ENCODE measurements at regions of chr22 and their contacts with region 1.

Region 1: GRCh38 chr22:44012162-44012561 is 11.9 kb upstream of the PARVB start:
- H3K4me3 Mint-ChIP-seq: no peak overlapping the region
- H3K27ac Mint-ChIP-seq: peak overlapping the region; percentile 91
- H3K4me1 Mint-ChIP-seq: peaks cover 24% of the 10 kb centered on the region
- H3K27me3 Mint-ChIP-seq: no peaks in the 10 kb centered on the region

Region 2: DNA sequence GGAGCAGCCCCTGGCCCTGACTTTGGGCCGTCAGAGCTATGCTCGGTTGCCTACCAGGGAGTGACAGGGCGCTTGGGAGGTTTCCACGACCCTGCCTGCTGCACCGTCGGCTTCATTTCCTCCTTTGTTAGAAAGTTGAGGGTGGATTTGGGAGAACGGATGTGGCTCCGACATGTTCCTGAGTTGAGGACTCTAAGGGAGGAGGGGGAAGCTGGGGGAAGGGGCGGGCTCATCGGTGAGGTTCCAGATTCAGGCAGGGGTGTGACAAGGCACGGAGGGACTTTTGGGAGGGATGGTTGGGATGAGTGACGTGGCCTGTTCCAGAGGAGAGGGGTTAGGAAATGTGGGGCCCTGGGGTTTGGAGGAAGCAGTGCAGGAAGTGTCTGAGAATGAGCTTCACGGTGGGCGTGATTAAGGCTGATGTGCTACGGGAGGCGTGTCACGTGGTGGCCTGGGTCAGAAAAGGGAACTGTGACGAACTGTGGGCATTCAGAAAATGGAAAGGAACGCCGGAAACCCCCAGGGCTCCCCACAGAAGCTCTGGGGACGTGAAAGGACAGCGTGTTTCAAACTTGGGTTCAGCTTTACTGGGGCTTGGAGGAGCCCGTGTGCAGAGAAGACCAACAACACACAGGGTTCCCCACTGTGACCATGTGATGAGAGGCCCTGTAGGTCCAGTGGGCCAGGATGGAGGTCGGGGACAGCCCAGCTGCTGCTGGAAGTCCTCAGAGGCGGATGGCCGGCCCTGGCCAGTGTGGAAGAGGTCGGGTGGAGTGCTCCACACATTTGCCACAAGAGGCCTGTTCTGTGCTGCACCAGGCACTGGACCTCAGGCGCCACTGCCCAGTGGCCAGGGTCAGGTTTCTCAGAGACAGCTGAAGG is 14.7 kb after region 1 on chr22:
- intact Hi-C with region 1: loop called (anchors 1 kb)
- H3K4me3 Mint-ChIP-seq: peak overlapping the region; percentile 82
- H3K27ac Mint-ChIP-seq: peak overlapping the region; percentile 100
- H3K4me1 Mint-ChIP-seq: peaks cover 87% of the 10 kb centered on the region
- H3K27me3 Mint-ChIP-seq: no peaks in the 10 kb centered on the region

Region 3: GRCh38 chr22:44049486-44050231 is 37.5 kb after region 1 on chr22:
- intact Hi-C with region 1: no loop called
- H3K4me3 Mint-ChIP-seq: no peak overlapping the region
- H3K27ac Mint-ChIP-seq: peak overlapping the region; percentile 31
- H3K4me1 Mint-ChIP-seq: peaks cover 52% of the 10 kb centered on the region
- H3K27me3 Mint-ChIP-seq: no peaks in the 10 kb centered on the region

Measured in dendritic cell treated with granulocyte-macrophage colony-stimulating factor and Interleukin-4, amounts not matched to agents 40 ng/mL and 50 ng/mL, for 4 days (primary cell).